Activated T-helper 1 cell treated with anti-CD3 and anti-CD28 coated beads, Interleukin-12 subunit alpha, Interleukin-12 subunit beta, Interleukin-2, Interleukin-4 antibody, amounts not matched to agents 30 ng/mL and 10 ng/mL and 1 ng/mL, durations not matched to agents 14 hours and 24 hours and 36 hours (primary cell): ENCODE measurements at regions of chr19 and their contacts with region 1.

Region 1: DNA sequence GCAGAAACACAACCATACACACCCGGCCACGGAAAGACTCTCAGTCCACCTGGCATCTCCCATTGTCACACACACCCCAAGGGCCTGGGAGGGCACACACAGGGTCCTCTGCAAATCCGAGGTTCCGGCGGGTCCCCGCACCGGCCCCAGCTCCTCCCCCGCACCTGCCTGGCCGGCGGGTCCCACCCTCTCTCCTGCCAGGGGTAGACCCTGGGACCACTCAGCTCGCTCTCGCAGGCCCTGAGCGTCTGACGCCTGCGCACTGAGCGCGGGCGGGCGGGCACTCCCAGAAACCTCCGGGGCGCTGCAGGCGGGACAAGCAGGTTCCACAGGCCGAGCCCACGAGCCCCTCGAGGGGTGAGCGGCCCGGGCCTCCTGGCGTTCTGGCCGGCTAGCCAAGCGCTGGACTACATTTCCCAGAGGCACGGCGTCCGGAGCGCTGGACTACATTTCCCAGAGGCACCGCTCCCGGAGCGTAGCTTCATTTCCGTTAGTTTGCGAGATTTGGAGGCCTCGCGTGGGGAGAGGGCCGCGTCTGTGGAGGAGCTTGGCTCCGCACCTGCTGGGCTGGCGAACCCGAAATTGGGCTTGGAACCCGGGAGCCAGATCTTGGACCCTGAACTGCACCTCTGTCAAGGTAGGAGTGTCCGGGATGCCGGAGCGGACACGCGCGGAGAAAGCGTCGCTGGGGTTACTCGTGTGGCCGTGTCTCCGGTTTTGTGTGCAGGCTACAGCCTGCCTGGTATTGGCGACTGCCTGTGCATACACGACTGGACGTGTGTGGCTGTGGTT is at the start of gene ZNF420:
- DNase-seq: peak; percentile 85
- H3K4me3 Mint-ChIP-seq: peak within 1 kb of the TSS; percentile 93
- H3K27ac Mint-ChIP-seq: peak within 1 kb of the TSS; percentile 90
- H3K4me1 Mint-ChIP-seq: peaks cover 21% of the 10 kb centered on the region
- H3K27me3 Mint-ChIP-seq: no peaks in the 10 kb centered on the region
- total RNA-seq, gene ZNF420: 5.9 and 9.1 TPM in 2 replicates

Region 2: DNA sequence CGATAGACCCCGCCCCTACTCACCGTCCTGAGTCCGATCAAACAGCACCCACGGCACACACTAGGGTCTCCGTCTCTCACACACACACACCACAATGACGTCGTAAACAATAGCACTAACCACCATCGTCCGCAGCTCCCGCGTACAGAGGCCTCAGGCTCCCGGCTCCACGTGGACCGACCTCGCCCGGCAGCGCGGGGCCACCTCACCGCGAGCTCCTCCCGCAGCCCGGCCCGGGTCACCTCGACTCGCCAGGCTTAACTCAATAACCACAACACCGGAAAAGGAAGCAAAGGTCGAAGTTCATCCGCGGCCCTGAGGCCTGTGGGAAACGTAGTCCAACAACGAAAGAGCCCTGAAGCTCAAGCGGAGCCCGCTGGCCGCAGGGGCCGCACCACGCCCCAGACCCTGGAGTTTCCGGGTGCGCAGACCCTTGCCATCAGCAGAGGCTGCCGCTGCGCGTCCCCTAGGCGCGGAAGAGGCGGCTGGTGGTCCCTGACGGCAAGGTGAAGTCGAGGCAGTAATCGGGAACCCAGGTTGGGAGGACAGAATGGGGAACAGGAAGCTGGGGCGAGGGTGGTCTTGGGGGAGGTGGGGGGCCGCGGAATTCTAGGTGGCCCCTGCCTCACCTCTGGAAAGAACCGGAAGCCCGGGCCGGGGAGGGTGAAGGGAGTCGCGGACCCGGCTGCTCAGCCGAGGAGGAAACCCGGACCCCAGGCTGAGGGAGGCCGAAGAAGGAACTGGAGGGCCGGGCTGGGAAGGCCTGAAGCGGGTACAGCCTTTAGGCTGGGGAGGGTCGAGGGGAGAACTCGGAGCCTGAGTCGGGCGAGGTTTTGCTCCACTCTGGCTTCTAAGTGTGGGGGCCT is 504.9 kb before region 1 on chr19 and contains the start of gene ZNF529:
- intact Hi-C with region 1: loop called (anchors 1 kb)
- DNase-seq: peak; percentile 85
- H3K4me3 Mint-ChIP-seq: peak within 1 kb of the TSS; percentile 89
- H3K27ac Mint-ChIP-seq: peak within 1 kb of the TSS; percentile 98
- H3K4me1 Mint-ChIP-seq: peaks cover 31% of the 10 kb centered on the region
- H3K27me3 Mint-ChIP-seq: no peaks in the 10 kb centered on the region
- total RNA-seq, gene ZNF529: 20.3 and 20.7 TPM in 2 replicates

Region 3: GRCh38 chr19:36837906-36838783 is 240.0 kb before region 1 on chr19 and contains the start of gene ZNF790:
- intact Hi-C with region 1: loop called (anchors 5 kb)
- DNase-seq: peak; percentile 81
- H3K4me3 Mint-ChIP-seq: no peak within 1 kb of the TSS
- H3K27ac Mint-ChIP-seq: no peak within 1 kb of the TSS
- H3K4me1 Mint-ChIP-seq: no peaks in the 10 kb centered on the region
- H3K27me3 Mint-ChIP-seq: no peaks in the 10 kb centered on the region
- total RNA-seq, gene ZNF790: 4.4 and 4.5 TPM in 2 replicates

Region 4: DNA sequence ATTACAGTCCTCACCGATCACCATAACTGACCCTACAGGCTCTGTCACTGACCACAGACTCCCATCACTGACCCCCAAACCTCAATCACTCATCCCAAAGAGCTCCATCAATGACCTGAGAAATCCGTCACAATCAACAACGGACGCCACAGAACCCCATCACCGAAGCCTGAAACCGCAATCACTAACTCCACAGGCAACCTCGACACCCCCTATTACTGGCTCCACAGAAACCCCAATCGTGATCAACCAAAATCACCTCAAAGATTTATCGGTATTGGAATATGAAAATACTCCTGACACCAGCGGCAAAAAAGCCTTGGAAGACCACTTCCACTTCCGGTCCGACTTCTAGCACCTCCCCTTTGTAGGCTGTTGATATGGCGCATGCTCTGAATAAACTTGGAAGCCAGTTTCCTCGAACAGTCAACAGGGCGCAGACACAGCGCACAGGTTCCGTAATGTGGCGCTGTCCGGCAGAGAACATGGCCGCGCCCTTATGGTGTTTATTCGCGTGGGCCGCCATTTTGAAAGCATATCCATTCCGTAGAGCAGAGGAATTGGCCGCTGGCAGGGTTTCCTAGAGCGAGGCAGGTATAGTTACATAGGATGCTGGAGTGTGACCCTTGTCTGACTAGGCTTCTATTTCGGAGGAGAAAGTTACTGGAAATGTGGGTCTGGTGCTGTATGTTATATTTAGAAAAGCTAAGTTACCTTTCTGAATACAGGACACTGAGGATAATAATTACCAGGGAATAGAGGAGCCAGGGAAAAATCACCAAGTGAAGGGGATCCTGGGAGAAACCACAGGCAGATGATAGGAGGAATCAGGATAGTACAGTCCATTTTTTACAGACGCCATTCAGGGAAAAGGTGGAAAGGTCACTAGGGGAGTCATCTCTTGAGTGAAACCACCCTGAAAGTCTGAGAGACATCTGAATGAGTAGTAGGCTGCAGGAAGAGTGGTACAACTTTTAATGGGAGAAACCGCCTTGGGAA is 94.5 kb after region 1 on chr19 and contains the start of gene ZNF585A:
- intact Hi-C with region 1: loop called (anchors 1 kb)
- DNase-seq: peak; percentile 74
- H3K4me3 Mint-ChIP-seq: no peak within 1 kb of the TSS
- H3K27ac Mint-ChIP-seq: no peak within 1 kb of the TSS
- H3K4me1 Mint-ChIP-seq: no peaks in the 10 kb centered on the region
- H3K27me3 Mint-ChIP-seq: no peaks in the 10 kb centered on the region
- total RNA-seq, gene ZNF585A: 1.2 and 2.6 TPM in 2 replicates

Region 5: DNA sequence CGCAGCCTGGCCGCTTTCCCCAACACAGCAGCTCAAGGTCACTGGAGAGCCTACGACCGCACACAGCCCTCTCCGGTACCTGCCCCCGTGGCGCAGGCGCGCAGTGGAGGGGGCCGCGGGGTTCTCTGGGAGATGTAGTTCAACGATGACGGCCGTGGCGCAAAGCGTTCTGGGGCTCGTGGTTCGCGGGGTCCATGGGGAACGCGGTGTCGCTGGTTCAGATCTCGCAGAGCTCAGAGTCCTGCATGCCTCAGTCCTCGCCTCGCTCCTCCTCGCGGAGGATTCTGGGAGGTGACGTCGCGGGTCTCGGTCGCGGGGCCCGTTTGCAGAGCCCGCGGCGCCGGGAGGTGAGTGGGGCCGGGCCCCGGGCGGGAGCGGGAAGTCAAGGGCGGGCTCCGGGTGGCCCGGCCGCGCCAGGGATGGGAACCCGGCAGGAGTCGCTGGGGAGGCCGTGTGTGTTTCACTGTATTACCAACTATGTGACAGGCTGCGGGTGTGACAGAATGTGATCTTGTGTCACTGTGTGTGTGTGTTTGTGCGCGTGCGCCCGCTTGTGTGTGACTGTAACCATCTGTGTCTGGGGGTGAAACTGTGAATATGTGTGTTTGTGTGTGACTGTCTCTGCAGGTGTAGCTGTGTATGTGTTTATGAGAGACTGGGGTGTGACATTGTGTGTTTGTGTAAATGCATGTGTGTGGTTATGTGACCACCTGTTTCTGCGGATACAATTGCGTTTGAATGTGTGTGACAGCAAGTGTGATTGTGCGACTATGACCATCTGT is 292.9 kb after region 1 on chr19 and contains the start of gene ZNF527:
- intact Hi-C with region 1: loop called (anchors 1 kb)
- DNase-seq: peak; percentile 96
- H3K4me3 Mint-ChIP-seq: peak within 1 kb of the TSS; percentile 99
- H3K27ac Mint-ChIP-seq: peak within 1 kb of the TSS; percentile 87
- H3K4me1 Mint-ChIP-seq: peaks cover 13% of the 10 kb centered on the region
- H3K27me3 Mint-ChIP-seq: no peaks in the 10 kb centered on the region
- total RNA-seq, gene ZNF527: 3.9 and 4.5 TPM in 2 replicates

Region 6: GRCh38 chr19:37655689-37656371 is 577.7 kb after region 1 on chr19:
- intact Hi-C with region 1: loop called (anchors 2 kb)
- DNase-seq: peak; percentile 83
- H3K4me3 Mint-ChIP-seq: peak overlapping the region; percentile 90
- H3K27ac Mint-ChIP-seq: peak overlapping the region; percentile 93
- H3K4me1 Mint-ChIP-seq: peaks cover 28% of the 10 kb centered on the region
- H3K27me3 Mint-ChIP-seq: no peaks in the 10 kb centered on the region